Activated naive CD4-positive, alpha-beta T cell treated with anti-CD3 and anti-CD28 coated beads for 36 hours (primary cell): ENCODE measurements at regions of chr16 and their contacts with region 1.

Region 1: GRCh38 chr16:81623363-81624102 is 155.6 kb upstream of the PLCG2 start:
- DNase-seq: peak; percentile 83
- H3K4me3 Mint-ChIP-seq: no peak overlapping the region
- H3K27ac Mint-ChIP-seq: peak overlapping the region; percentile 22
- H3K4me1 Mint-ChIP-seq: peaks cover 5% of the 10 kb centered on the region
- H3K27me3 Mint-ChIP-seq: no peaks in the 10 kb centered on the region

Region 2: DNA sequence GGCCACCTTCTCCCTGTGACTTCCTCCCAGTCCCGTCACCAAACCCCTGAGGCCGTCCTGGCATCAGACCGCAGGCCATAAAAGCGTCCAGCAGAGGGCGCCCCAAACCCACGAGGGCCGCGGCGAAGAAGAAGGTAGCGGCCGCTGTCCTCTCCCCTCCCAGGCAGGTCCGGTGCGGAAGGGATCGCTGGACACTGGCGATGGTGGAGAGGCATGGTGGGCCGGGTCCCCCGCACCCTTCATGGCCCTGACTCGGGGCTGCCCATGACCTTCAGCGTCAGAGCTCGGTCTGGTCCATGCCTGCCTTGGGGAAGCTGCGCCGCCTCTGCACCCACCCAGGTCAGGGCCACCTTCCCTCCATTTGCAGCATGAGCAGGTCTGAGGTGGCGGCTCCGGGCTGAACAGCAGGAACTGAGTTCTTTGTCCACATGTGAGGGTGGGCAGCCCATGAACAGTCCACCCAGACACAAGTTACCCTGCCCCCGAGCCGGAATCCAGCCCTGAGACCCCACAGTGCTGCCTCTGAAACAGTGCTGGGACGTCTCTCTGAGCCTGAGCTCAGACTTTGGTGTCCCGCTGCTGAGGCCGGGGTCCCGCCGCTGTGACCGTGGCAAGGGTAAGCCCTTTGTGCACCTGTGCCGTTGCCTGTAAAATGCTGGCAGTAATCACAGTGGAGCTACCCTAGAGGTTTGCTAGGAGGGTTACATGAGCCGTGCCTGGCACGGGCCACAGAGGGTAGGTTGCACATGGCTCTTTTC is 219.7 kb before region 1 on chr16:
- CTCF ChIA-PET with region 1: interaction called, 18 read pairs
- intact Hi-C with region 1: loop called (anchors 1 kb)
- DNase-seq: peak; percentile 89
- H3K4me3 Mint-ChIP-seq: no peak overlapping the region
- H3K27ac Mint-ChIP-seq: no peak overlapping the region
- H3K4me1 Mint-ChIP-seq: no peaks in the 10 kb centered on the region
- H3K27me3 Mint-ChIP-seq: no peaks in the 10 kb centered on the region

Region 3: GRCh38 chr16:81547194-81547938 is 76.2 kb before region 1 on chr16:
- CTCF ChIA-PET with region 1: no interaction called
- intact Hi-C with region 1: no loop called
- DNase-seq: no peak
- H3K4me3 Mint-ChIP-seq: no peak overlapping the region
- H3K27ac Mint-ChIP-seq: no peak overlapping the region
- H3K4me1 Mint-ChIP-seq: peaks cover 49% of the 10 kb centered on the region
- H3K27me3 Mint-ChIP-seq: no peaks in the 10 kb centered on the region

Region 4: GRCh38 chr16:81604960-81605383 is 18.6 kb before region 1 on chr16:
- CTCF ChIA-PET with region 1: no interaction called
- intact Hi-C with region 1: no loop called
- DNase-seq: no peak
- H3K4me3 Mint-ChIP-seq: no peak overlapping the region
- H3K27ac Mint-ChIP-seq: no peak overlapping the region
- H3K4me1 Mint-ChIP-seq: no peaks in the 10 kb centered on the region
- H3K27me3 Mint-ChIP-seq: no peaks in the 10 kb centered on the region

Region 5: GRCh38 chr16:81696961-81697615 is 73.6 kb after region 1 on chr16:
- CTCF ChIA-PET with region 1: interaction called, 37 read pairs
- intact Hi-C with region 1: loop called (anchors 1 kb)
- DNase-seq: peak; percentile 78
- H3K4me3 Mint-ChIP-seq: no peak overlapping the region
- H3K27ac Mint-ChIP-seq: peak overlapping the region; percentile 63
- H3K4me1 Mint-ChIP-seq: no peaks in the 10 kb centered on the region
- H3K27me3 Mint-ChIP-seq: no peaks in the 10 kb centered on the region

Region 6: DNA sequence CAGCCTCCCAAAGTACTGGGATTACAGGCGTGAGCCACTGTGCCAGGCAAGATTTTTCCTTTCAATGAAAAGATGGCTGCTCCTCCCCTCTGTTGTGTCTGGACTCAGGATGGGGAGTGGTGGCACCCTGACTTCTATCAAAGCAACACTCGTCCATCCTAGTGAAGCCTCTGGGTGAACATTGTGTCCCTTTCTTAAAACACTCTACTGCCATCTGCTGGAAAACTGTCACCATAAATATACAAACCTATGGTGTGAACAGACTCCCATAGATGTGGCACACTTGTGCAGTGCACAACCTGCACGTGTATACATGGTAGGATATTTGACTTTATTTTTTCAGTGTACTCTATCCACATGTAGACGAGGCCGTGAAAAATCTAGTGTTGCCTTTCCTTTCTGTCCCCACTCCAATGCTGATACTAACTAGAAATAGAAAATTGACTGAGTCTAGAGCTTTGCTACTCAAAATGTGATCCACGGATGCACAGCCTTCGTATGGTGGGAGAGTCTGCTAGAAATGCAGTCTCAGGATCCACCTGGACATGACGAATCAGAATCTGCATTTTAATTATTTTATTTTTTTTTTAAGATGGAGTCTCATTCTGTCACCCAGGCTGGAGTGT is 99.7 kb after region 1 on chr16:
- CTCF ChIA-PET with region 1: interaction called, 67 read pairs
- intact Hi-C with region 1: loop called (anchors 1 kb)
- DNase-seq: peak; percentile 53
- H3K4me3 Mint-ChIP-seq: no peak overlapping the region
- H3K27ac Mint-ChIP-seq: no peak overlapping the region
- H3K4me1 Mint-ChIP-seq: peaks cover 3% of the 10 kb centered on the region
- H3K27me3 Mint-ChIP-seq: no peaks in the 10 kb centered on the region